Right ventricle myocardium superior (tissue), 1 donor: ENCODE measurements at regions of chr1 and their contacts with region 1.

Region 1: DNA sequence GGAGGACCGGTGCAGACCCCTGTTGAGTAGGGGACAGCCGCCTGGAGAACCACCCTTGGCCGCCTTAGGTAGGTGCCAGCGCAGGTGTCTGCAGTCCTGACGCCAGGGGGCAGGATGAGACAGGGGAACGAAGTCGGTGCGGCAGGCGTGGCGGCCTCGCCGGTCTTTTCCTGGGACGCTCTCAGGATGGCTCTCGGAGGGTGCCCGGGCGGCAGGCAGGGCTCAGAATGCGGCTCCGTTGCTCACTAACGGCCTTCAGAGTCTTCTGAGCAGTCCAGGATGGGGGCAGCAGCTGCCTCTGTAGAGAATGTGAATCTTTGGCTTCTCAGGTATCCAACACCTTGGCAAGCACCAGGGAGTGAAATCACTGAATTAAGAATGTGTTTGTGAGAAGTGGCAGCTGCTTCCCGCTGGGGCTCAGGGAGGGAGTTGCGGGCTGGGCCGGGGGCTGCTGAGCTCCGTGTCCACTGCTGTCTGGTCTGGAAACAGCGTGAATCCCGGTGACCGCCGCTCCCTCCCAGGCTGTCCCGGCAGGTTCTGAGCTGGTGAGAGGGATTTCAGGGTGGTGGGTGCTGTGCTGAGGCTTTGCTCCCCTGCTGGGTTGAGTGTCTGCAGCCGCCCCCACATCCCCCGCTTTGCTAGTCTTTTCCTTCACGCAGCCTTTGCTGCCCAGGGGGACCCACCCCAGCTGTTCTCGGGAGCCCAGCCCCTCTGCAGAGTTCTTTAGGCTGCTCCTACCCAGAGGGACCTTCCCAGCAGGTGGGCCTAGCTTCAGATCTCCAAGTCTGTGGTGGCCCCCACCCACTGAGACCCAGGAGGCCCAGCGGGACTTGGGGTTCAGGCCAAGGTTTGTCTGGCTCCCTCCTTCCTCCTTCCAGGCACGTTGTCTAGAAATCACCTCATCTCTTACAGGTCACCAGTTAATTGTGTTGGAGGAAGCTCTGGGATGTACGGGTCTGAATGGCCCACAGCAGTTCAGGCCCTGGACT is 11.1 kb upstream of the C1orf174 start:
- DNase-seq: peak; percentile 74
- ATAC-seq: peak; percentile 83

Region 2: GRCh38 chr1:3775490-3776230 is 135.5 kb before region 1 on chr1:
- intact Hi-C with region 1: no loop called
- DNase-seq: peak; percentile 77
- ATAC-seq: no peak

Region 3: DNA sequence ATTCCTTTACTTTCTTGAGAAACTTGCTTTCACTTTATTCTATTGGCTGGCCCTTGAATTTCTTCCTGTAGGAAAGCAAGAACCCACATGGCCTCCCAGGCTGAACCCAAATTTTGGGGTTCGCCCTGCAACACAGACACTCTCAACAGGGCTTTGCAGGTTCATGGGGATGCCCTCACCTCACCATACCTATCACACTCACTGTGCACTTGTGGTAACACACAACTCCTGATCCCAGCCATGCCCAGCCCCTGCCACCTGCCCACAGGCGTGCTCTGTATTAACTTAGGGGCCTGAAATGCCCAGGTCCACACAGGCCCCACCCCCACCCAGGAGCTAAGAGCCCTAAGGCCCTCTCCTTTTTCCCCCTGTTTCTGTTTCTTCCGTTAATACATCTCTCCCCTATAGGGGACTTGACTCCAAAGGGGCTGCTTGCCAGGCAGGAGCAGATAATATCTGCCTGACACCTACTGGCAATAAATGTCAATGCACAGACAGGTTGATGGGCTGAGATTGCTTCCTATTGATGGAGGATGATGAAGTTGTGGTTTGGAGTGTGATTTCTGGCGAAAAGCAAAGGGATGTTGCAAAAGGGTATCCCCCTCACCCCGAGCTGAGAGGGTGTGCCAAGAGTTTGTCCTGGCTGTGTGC is 914.8 kb after region 1 on chr1:
- intact Hi-C with region 1: loop called (anchors 10 kb)
- DNase-seq: no peak
- ATAC-seq: peak; percentile 36